Endothelial cell of umbilical vein (primary cell): ENCODE measurements at regions of chr6 and their contacts with region 1.

Region 1: GRCh38 chr6:41920921-41921711 is at the starts of genes BYSL and MED20:
- DNase-seq: peak; percentile 93
- H3K4me3 ChIP-seq: peak within 1 kb of the TSS; percentile 54 to 83 (median 82)
- H3K27ac ChIP-seq: peak within 1 kb of the TSS; percentile 94
- H3K4me1 ChIP-seq: peaks cover 38% of the 10 kb centered on the region
- H3K27me3 ChIP-seq: no peaks in the 10 kb centered on the region
- CTCF ChIP-seq: peak; percentile 98
- POLR2A ChIP-seq: peak; percentile 72
- total RNA-seq, gene BYSL: 41.8 and 45.7 TPM in 2 replicates
- total RNA-seq, gene MED20: 25.5 and 30.4 TPM in 2 replicates

Region 2: GRCh38 chr6:41801380-41801779 is 119.7 kb before region 1 on chr6:
- CTCF ChIA-PET with region 1: interaction called, 31 read pairs
- POLR2A ChIA-PET with region 1: no interaction called
- dilution Hi-C with region 1: no loop called
- intact Hi-C with region 1: loop called (anchors 1 kb)
- DNase-seq: peak; percentile 67
- H3K4me3 ChIP-seq: no peak overlapping the region
- H3K27ac ChIP-seq: no peak overlapping the region
- H3K4me1 ChIP-seq: no peaks in the 10 kb centered on the region
- H3K27me3 ChIP-seq: no peaks in the 10 kb centered on the region
- CTCF ChIP-seq: peak; percentile 65 to 68
- POLR2A ChIP-seq: no peak

Region 3: DNA sequence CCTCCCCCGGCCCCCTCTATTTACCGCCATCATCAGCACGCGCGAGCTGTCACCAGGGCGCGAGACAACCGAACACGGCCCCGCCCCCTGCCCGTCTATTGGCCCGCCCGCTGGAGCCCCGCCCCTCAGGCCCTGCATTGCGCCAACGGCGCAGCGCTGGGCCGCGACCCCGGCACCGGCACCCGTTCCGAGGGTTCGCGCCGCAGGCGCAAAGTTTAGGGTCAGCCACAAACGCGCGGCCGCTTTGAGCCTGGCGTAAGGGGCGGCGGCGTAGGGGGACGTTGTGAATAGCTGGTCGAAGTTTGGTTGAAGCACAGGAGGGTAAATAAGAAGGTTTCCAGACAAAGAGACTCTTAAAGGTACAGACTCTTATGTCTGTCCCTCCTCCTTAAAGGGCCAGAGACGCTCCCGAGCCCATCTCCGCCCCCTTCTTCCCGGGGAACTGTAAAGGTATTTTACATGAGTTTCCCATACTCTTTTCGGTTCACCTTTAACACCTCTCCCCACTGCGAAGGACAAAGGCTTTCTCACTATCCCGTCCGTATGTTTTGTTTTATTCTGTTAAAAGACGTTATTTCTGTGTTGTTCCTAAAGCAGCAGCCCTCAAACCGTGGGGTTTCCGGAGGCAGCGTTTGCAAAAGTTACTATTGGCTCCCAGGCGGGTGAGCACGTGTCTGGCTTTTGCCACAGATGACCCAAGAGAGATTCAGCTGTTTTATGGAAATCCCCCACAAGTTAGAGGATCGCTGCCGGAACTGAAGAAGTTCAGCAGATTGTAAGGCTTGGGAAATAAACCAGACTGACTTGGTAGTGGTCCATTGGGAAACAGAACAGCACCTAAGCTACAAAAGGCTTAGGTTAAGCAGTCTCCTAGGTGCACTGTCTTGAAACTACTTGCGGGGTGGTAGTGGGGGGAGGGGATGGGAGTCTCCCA is 25.5 kb before region 1 on chr6 and contains the start of gene USP49:
- CTCF ChIA-PET with region 1: interaction called, 13 read pairs
- POLR2A ChIA-PET with region 1: interaction called, 4 read pairs
- dilution Hi-C with region 1: no loop called
- intact Hi-C with region 1: loop called (anchors 1 kb)
- DNase-seq: peak; percentile 89
- H3K4me3 ChIP-seq: peak within 1 kb of the TSS; percentile 70 to 78 (median 72)
- H3K27ac ChIP-seq: peak within 1 kb of the TSS; percentile 84
- H3K4me1 ChIP-seq: peaks cover 12% of the 10 kb centered on the region
- H3K27me3 ChIP-seq: peaks cover 0 to 2% of the 10 kb centered on the region in 2 experiments
- CTCF ChIP-seq: no peak
- POLR2A ChIP-seq: peak; percentile 70
- total RNA-seq, gene USP49: 4.1 and 4.5 TPM in 2 replicates

Region 4: DNA sequence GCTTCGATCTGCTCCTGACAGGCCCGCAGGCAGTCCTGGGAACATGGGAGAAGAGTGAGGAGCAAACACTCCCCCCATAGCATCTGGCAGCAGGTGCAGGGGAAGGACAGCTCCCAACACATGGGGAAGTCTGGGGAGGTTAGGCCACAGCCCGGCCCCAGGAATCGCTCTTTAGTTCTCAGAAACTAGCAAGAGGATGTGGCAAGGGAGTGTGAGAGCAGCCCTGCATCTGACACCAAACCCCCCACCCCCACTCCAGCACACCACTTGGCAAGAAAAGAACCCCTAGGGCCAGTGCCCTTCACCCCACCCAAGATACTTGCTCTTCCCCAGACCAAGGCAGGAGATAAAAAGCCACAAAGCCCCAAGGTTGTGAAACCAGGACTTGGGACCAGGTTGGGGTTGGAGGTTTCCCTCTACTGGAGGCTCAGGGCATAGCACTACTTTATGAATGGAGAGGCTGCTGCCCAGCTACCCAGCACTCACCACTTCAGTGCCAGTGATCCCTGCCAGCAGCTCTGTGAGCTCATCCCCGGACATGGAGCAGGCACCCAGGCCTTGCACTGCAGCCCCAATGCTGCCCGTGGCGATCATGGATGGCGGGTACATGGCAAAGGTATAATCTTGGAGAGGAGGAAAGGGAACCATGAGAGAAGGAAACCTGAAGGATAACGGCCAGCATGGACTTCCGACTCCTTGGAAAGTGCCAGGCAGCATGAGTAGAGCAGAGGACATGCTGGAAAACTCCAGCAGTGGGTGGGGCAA is 15.1 kb after region 1 on chr6:
- CTCF ChIA-PET with region 1: interaction called, 54 read pairs
- POLR2A ChIA-PET with region 1: interaction called, 3 read pairs
- dilution Hi-C with region 1: no loop called
- intact Hi-C with region 1: loop called (anchors 1 kb)
- DNase-seq: peak; percentile 82
- H3K4me3 ChIP-seq: no peak overlapping the region
- H3K27ac ChIP-seq: no peak overlapping the region
- H3K4me1 ChIP-seq: peaks cover 27% of the 10 kb centered on the region
- H3K27me3 ChIP-seq: no peaks in the 10 kb centered on the region
- CTCF ChIP-seq: peak; percentile 84 to 86
- POLR2A ChIP-seq: no peak

Region 5: GRCh38 chr6:41966961-41967311 is 45.8 kb after region 1 on chr6:
- CTCF ChIA-PET with region 1: interaction called, 3 read pairs
- POLR2A ChIA-PET with region 1: no interaction called
- dilution Hi-C with region 1: no loop called
- intact Hi-C with region 1: loop called (anchors 2 kb)
- DNase-seq: peak; percentile 76
- H3K4me3 ChIP-seq: no peak overlapping the region
- H3K27ac ChIP-seq: peak overlapping the region; percentile 58
- H3K4me1 ChIP-seq: peaks cover 38% of the 10 kb centered on the region
- H3K27me3 ChIP-seq: no peaks in the 10 kb centered on the region
- CTCF ChIP-seq: no peak
- POLR2A ChIP-seq: peak; percentile 15